ENCODE measurements at regions of chr7 and their contacts with region 1.

Region 1: GRCh38 chr7:151759591-151760042 is 117.3 kb downstream of the PRKAG2 start:
- DNase-seq: peak; percentile 69 to 72
- H3K4me3 ChIP-seq: no peak overlapping the region
- H3K27ac ChIP-seq: no peak overlapping the region
- H3K4me1 ChIP-seq: peaks cover 2 to 14% of the 10 kb centered on the region in 2 donors
- H3K27me3 ChIP-seq: no peaks in the 10 kb centered on the region
- CTCF ChIP-seq: peak; percentile 76 to 92 (median 84)
- POLR2A ChIP-seq: no peak

Region 2: GRCh38 chr7:151381348-151382078 is 378.1 kb before region 1 on chr7:
- intact Hi-C with region 1: loop called (anchors 10 kb)
- DNase-seq: no peak
- H3K4me3 ChIP-seq: no peak overlapping the region
- H3K27ac ChIP-seq: no peak overlapping the region
- H3K4me1 ChIP-seq: peaks cover 7 to 18% of the 10 kb centered on the region in 2 donors
- H3K27me3 ChIP-seq: no peaks in the 10 kb centered on the region
- CTCF ChIP-seq: no peak
- POLR2A ChIP-seq: no peak

Region 3: GRCh38 chr7:151448261-151449252 is 311.1 kb before region 1 on chr7:
- intact Hi-C with region 1: loop called (anchors 5 kb)
- DNase-seq: peak; percentile 69 to 76
- H3K4me3 ChIP-seq: peak overlapping the region in 1 of 3 donors; percentile 29
- H3K27ac ChIP-seq: peak overlapping the region in 2 of 3 donors; percentile 14 to 61
- H3K4me1 ChIP-seq: peaks cover 3 to 6% of the 10 kb centered on the region in 2 donors
- H3K27me3 ChIP-seq: no peaks in the 10 kb centered on the region
- CTCF ChIP-seq: peak; percentile 61 to 88 (median 81)
- POLR2A ChIP-seq: no peak

Region 4: GRCh38 chr7:151570366-151570915 is 189.2 kb before region 1 on chr7:
- intact Hi-C with region 1: loop called (anchors 5 kb)
- DNase-seq: no peak
- H3K4me3 ChIP-seq: no peak overlapping the region
- H3K27ac ChIP-seq: peak overlapping the region; percentile 82 to 86 (median 86)
- H3K4me1 ChIP-seq: peaks cover 23 to 39% of the 10 kb centered on the region in 2 donors
- H3K27me3 ChIP-seq: no peaks in the 10 kb centered on the region
- CTCF ChIP-seq: peak; percentile 14 to 69 (median 36)
- POLR2A ChIP-seq: no peak

Region 5: DNA sequence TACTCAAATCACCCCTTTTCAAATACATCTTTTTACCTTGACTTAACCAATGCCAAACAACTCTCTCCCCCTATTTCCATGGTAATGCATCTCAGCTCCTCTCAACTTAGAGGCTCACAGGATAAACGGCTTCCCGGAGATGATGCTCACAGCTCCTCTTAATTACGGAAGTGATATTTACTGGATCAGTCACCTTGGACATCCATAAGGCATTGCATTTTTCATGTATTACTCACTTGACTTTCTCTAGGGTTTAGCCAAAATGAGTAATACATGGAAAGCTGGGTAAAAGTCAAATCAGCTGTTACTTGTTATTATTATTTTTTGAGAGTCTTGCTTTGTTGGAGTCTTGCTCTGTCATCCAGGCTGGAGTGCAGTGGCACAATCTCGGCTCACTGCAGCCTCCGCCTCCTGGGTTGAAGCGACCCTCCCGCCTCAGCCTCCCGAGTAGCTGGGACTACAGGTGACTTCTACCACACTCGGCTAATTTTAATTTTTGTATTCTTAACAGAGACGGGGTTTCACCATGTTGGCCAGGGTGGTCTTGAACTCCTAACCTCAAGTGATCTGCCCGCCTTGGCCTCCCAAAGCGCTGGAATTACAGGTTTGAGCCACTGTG is 166.6 kb before region 1 on chr7:
- intact Hi-C with region 1: no loop called
- DNase-seq: no peak
- H3K4me3 ChIP-seq: no peak overlapping the region
- H3K27ac ChIP-seq: no peak overlapping the region
- H3K4me1 ChIP-seq: peaks cover 15 to 17% of the 10 kb centered on the region in 2 donors
- H3K27me3 ChIP-seq: no peaks in the 10 kb centered on the region
- CTCF ChIP-seq: no peak
- POLR2A ChIP-seq: no peak

Region 6: DNA sequence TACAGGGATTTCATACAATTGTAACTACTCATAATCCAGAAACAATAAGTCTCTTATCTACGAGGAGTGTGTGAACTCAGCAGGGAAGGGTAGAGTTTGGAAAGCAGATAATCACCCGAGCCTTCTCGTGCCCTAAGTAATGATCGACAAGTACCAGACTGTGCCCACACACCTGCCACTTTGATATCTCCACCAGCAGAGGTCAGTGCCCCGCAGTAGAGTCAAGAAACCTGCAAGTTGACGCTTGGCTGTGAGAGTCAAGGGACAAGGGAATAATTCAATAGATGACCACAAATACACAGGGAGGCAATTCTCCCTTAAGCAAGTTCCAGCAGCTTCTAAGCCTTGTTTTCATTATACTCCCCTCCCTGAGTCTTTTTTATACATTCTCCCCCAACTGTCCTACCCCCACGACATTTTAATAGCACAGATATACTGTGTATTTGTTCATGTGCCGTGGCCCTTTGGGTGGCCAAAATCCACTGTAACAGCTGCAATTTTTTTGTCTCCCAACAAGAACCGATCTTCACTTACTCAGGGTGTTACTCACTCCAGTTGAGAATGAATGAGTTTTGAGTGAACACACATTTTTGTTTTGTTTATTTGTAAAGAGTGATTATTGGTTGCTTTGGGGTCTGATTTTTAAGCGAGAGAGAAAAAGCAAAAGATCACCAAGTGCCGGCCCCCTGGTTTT is 133.0 kb before region 1 on chr7:
- intact Hi-C with region 1: loop called (anchors 5 kb)
- DNase-seq: peak; percentile 57 to 64
- H3K4me3 ChIP-seq: no peak overlapping the region
- H3K27ac ChIP-seq: no peak overlapping the region
- H3K4me1 ChIP-seq: peaks cover 6 to 9% of the 10 kb centered on the region in 2 donors
- H3K27me3 ChIP-seq: no peaks in the 10 kb centered on the region
- CTCF ChIP-seq: peak in 4 of 6 experiments; percentile 42 to 52 (median 48)
- POLR2A ChIP-seq: no peak

Region 7: DNA sequence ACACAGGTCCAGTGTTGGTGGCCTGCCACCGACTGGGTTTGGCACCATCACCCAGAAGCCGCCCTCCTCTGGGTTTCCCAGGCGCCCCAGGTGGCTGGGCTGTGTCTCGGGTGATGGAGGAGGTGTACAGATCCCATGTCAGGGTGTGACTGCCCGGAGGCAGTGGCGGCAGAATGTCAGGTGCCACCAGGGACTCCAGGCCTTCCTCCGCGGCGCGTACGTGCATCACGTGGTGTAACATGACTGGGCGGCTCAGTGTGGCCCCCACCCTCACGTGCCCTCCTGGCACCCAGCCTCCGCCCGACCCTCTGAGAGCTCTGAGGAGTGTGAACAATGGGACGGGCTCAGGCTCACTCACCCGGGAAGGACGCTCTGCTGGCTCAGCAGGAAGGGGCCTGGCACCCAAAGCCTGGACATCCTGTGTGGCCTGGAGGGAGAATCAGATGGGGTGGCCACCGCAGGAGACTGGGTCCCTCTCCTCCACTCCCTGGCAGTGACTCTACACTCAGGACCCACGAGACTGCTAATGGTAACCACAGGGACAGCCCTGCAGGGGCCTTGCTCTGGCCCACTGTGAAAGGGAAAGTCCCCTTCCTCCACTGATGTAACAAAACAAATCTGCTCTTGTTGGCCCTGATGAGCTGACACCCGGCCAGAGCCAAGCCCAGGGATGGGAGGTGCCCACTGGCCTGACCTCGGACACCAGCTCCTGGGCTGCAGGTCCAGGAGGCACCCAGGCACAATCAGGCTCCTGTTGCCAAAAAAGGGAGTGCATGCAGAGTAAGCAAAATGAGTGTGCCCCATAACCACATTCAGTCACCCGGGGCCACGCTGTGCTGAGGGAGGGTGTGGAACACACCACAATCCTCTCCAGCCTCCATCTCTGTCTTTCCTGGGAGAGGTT is 47.5 kb before region 1 on chr7:
- intact Hi-C with region 1: no loop called
- DNase-seq: peak; percentile 51 to 63
- H3K4me3 ChIP-seq: no peak overlapping the region
- H3K27ac ChIP-seq: peak overlapping the region in 2 of 3 donors; percentile 34 to 66
- H3K4me1 ChIP-seq: peaks cover 15 to 16% of the 10 kb centered on the region in 2 donors
- H3K27me3 ChIP-seq: no peaks in the 10 kb centered on the region
- CTCF ChIP-seq: no peak
- POLR2A ChIP-seq: peak in 1 of 2 donors; percentile 29

Region 8: GRCh38 chr7:152035817-152036216 is 276.2 kb after region 1 on chr7:
- intact Hi-C with region 1: no loop called
- DNase-seq: no peak
- H3K4me3 ChIP-seq: no peak overlapping the region
- H3K27ac ChIP-seq: no peak overlapping the region
- H3K4me1 ChIP-seq: no peaks in the 10 kb centered on the region
- H3K27me3 ChIP-seq: no peaks in the 10 kb centered on the region
- CTCF ChIP-seq: no peak
- POLR2A ChIP-seq: no peak

Measured in thyroid gland (tissue), 4 donors.